T-cell (primary cell): ENCODE measurements at regions of chr2 and their contacts with region 1.

Region 1: DNA sequence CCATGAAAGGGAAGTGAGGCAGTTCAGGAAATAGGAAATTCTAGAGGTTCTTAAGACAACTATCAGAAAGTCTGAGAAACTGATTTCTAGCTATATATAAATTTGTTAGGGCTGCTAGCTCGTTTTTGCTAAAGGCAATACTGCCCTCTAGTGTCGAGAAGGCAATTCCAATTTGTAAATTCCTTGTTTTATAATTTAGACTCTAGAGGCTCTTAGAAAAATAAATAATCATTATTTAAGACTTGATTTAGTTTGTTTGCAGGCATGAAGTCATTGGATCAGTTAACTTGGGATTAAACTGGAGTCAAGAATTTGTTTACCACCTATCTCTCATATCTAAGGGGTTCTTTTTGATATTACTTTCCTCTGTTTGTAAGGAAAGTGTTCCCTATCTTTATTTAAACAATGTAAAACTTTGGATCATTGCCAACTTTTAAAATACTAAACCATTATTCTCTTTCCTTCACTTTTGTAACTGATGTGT is 66.2 kb downstream of the ACVR2A start:
- DNase-seq: peak in 21 of 35 experiments; percentile 0 to 75 (median 14)
- ATAC-seq: peak in 2 of 4 experiments; percentile 9 to 32
- H3K4me3 ChIP-seq: no peak overlapping the region
- H3K4me3 Mint-ChIP-seq: no peak overlapping the region
- H3K27ac ChIP-seq: no peak overlapping the region
- H3K27ac Mint-ChIP-seq: peak overlapping the region in 1 of 2 donors; percentile 65
- H3K4me1 ChIP-seq: no peaks in the 10 kb centered on the region
- H3K4me1 Mint-ChIP-seq: peaks cover 0 to 16% (median 12%) of the 10 kb centered on the region in 3 donors
- H3K27me3 ChIP-seq: no peaks in the 10 kb centered on the region
- H3K27me3 Mint-ChIP-seq: no peaks in the 10 kb centered on the region

Region 2: GRCh38 chr2:147045113-147045512 is 865.9 kb before region 1 on chr2:
- CTCF ChIA-PET with region 1: interaction called, 9 to 73 read pairs
- POLR2A ChIA-PET with region 1: no interaction called
- DNase-seq: peak in 25 of 35 experiments; percentile 0 to 49 (median 12)
- ATAC-seq: no peak
- H3K4me3 ChIP-seq: no peak overlapping the region
- H3K4me3 Mint-ChIP-seq: no peak overlapping the region
- H3K27ac ChIP-seq: no peak overlapping the region
- H3K27ac Mint-ChIP-seq: peak overlapping the region in 1 of 2 donors; percentile 20
- H3K4me1 ChIP-seq: no peaks in the 10 kb centered on the region
- H3K4me1 Mint-ChIP-seq: peaks cover 0 to 2% (median 0%) of the 10 kb centered on the region in 3 donors
- H3K27me3 ChIP-seq: no peaks in the 10 kb centered on the region
- H3K27me3 Mint-ChIP-seq: no peaks in the 10 kb centered on the region

Region 3: DNA sequence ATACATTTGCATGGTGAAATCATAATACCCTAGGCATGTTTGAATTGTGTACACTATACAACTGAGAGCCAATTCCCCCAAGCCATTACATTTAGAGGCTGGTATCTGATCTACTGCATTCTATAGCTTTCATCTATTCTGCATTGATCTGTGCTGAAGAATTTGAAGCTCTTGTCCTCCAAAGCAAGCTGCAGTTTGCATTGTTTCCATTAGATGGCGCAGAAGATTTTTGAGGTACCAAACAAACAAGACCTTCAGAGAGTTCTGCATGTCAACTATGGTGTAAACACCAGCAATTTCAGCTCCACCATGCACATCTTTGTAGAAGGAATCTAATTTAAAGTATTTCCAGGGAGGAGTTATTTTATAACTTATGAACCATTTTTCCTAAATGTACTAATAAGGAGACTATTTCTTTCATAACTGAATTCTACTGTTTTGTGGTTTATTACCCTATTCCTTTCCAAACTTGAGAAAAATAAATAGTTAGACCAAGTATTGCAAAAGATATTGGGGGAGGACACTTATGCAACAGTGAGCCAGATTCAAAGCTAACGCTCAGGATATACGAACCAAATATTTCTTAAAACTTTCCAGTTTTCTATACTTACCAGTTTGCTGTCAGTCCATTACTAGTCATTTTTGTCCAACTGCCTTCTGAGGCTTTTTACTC is 828.0 kb before region 1 on chr2:
- CTCF ChIA-PET with region 1: interaction called, 52 to 85 read pairs
- POLR2A ChIA-PET with region 1: no interaction called
- DNase-seq: peak in 26 of 35 experiments; percentile 2 to 70 (median 16)
- ATAC-seq: peak in 3 of 4 experiments; percentile 36 to 60 (median 41)
- H3K4me3 ChIP-seq: no peak overlapping the region
- H3K4me3 Mint-ChIP-seq: no peak overlapping the region
- H3K27ac ChIP-seq: no peak overlapping the region
- H3K27ac Mint-ChIP-seq: no peak overlapping the region
- H3K4me1 ChIP-seq: no peaks in the 10 kb centered on the region
- H3K4me1 Mint-ChIP-seq: peaks cover 0 to 5% (median 0%) of the 10 kb centered on the region in 3 donors
- H3K27me3 ChIP-seq: no peaks in the 10 kb centered on the region
- H3K27me3 Mint-ChIP-seq: peaks cover 0 to 13% of the 10 kb centered on the region in 2 donors

Region 4: GRCh38 chr2:147331790-147332419 is 579.1 kb before region 1 on chr2:
- CTCF ChIA-PET with region 1: interaction called in 1 of 2 experiments, 13 read pairs
- POLR2A ChIA-PET with region 1: no interaction called
- DNase-seq: peak in 22 of 35 experiments; percentile 4 to 58 (median 20)
- ATAC-seq: peak; percentile 59 to 78 (median 67)
- H3K4me3 ChIP-seq: no peak overlapping the region
- H3K4me3 Mint-ChIP-seq: peak overlapping the region in 1 of 3 donors; percentile 26
- H3K27ac ChIP-seq: no peak overlapping the region
- H3K27ac Mint-ChIP-seq: peak overlapping the region; percentile 38 to 40
- H3K4me1 ChIP-seq: no peaks in the 10 kb centered on the region
- H3K4me1 Mint-ChIP-seq: peaks cover 15 to 21% (median 18%) of the 10 kb centered on the region in 3 donors
- H3K27me3 ChIP-seq: no peaks in the 10 kb centered on the region
- H3K27me3 Mint-ChIP-seq: peaks cover 0 to 4% of the 10 kb centered on the region in 2 donors